Natural killer cell (primary cell): ENCODE measurements at regions of chr15 and their contacts with region 1.

Region 1: GRCh38 chr15:43329960-43330779 is at the start of gene LCMT2:
- DNase-seq: peak; percentile 89 to 98
- ATAC-seq: peak; percentile 83 to 92 (median 86)
- H3K4me3 ChIP-seq: peak within 1 kb of the TSS; percentile 92
- H3K4me3 Mint-ChIP-seq: peak within 1 kb of the TSS; percentile 95
- H3K27ac ChIP-seq: peak within 1 kb of the TSS; percentile 94
- H3K27ac Mint-ChIP-seq: peak within 1 kb of the TSS; percentile 98 to 99
- H3K4me1 ChIP-seq: peaks cover 18% of the 10 kb centered on the region
- H3K4me1 Mint-ChIP-seq: peaks cover 40 to 42% of the 10 kb centered on the region in 2 donors
- H3K27me3 ChIP-seq: no peaks in the 10 kb centered on the region
- H3K27me3 Mint-ChIP-seq: no peaks in the 10 kb centered on the region
- CTCF ChIP-seq: no peak
- total RNA-seq, gene LCMT2: 8.0 to 12.6 (median 10.2) TPM

Region 2: DNA sequence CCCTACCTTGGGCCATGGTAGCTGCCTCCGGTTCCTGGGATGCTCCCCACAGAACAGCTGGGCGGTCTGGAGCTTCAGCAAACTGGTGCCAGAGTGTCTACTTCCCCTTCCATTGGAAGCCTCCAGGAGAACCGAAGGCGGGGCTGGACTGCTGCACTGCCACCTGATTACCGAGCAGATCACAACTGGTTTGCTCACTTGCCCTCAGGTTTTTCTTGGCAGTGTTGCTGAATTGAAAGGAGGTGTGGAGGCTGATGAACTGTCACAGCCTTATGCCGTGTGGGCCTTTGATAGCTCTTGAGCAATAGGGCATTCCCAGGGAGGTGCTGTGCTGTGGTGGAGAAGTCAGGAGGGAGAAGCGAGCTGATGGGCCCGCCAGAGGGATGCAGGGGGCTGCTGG is 63.3 kb before region 1 on chr15 and contains the start of gene TGM5:
- intact Hi-C with region 1: no loop called
- DNase-seq: no peak
- ATAC-seq: no peak
- H3K4me3 ChIP-seq: no peak within 1 kb of the TSS
- H3K4me3 Mint-ChIP-seq: no peak within 1 kb of the TSS
- H3K27ac ChIP-seq: no peak within 1 kb of the TSS
- H3K27ac Mint-ChIP-seq: no peak within 1 kb of the TSS
- H3K4me1 ChIP-seq: peaks cover 14% of the 10 kb centered on the region
- H3K4me1 Mint-ChIP-seq: peaks cover 0 to 10% of the 10 kb centered on the region in 2 donors
- H3K27me3 ChIP-seq: no peaks in the 10 kb centered on the region
- H3K27me3 Mint-ChIP-seq: peaks cover 11 to 15% of the 10 kb centered on the region in 2 donors
- CTCF ChIP-seq: no peak
- total RNA-seq, gene TGM5: not detected

Region 3: GRCh38 chr15:43293402-43293801 is 36.8 kb before region 1 on chr15:
- intact Hi-C with region 1: no loop called
- DNase-seq: peak in 1 of 2 donors; percentile 31
- ATAC-seq: peak in 2 of 3 donors; percentile 51 to 52
- H3K4me3 ChIP-seq: no peak overlapping the region
- H3K4me3 Mint-ChIP-seq: no peak overlapping the region
- H3K27ac ChIP-seq: no peak overlapping the region
- H3K27ac Mint-ChIP-seq: no peak overlapping the region
- H3K4me1 ChIP-seq: peaks cover 4% of the 10 kb centered on the region
- H3K4me1 Mint-ChIP-seq: no peaks in the 10 kb centered on the region
- H3K27me3 ChIP-seq: no peaks in the 10 kb centered on the region
- H3K27me3 Mint-ChIP-seq: peaks cover 30 to 59% of the 10 kb centered on the region in 2 donors
- CTCF ChIP-seq: no peak

Region 4: DNA sequence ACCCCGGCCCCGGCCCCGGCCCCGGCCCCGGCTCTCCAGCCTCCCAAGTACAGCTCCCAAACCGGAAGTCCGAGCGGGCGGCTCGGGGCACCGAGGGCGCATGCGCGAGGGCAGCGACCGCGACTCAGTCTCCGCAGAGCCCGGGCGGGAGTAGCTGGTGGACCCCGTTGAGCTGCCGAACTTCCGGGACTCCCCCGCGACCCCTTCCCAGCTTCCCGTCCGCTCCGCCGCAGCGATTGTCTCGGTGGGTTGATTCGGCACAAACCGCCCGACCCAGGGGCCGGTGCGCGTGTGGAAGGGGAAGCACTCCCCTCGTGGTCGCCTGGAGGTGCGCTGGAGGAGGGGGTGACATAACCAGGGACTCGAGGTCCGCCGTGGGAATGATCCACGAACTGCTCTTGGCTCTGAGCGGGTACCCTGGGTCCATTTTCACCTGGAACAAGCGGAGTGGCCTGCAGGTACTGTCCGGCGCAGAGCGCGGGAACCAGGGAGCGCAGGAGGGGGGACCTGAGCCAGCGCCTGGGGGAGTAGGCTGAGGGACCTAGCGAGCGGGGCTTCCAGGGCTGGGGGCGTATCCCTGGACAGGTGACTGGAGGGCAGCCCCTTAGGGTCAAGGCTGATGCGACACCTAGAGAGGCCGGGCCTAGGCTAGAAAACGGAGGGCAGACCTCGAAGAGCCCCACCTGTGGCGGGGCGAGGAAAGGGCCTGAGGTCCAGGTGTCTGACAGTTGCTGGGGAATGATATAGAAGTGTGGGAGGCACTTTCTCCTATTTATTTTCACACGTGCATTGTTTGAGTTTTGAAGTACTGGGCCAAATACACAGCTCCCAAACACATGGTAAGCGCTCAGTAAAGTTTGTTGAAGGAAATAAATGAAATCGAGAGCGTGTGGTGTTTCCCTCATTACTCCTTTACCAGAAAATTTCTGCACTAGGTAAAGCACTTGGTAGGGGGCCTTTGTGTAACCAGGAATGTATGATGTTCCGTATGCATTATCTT is 41.1 kb after region 1 on chr15 and contains the starts of genes TUBGCP4 and ZSCAN29:
- intact Hi-C with region 1: loop called (anchors 1 kb)
- DNase-seq: peak; percentile 71 to 84
- ATAC-seq: peak; percentile 82 to 86 (median 83)
- H3K4me3 ChIP-seq: peak within 1 kb of the TSS; percentile 83
- H3K4me3 Mint-ChIP-seq: peak within 1 kb of the TSS; percentile 96
- H3K27ac ChIP-seq: peak within 1 kb of the TSS; percentile 67
- H3K27ac Mint-ChIP-seq: peak within 1 kb of the TSS; percentile 76 to 89
- H3K4me1 ChIP-seq: peaks cover 20% of the 10 kb centered on the region
- H3K4me1 Mint-ChIP-seq: peaks cover 58 to 61% of the 10 kb centered on the region in 2 donors
- H3K27me3 ChIP-seq: no peaks in the 10 kb centered on the region
- H3K27me3 Mint-ChIP-seq: no peaks in the 10 kb centered on the region
- CTCF ChIP-seq: no peak
- total RNA-seq, gene TUBGCP4: 12.0 to 17.5 (median 15.1) TPM
- total RNA-seq, gene ZSCAN29: 26.5 to 38.3 (median 34.2) TPM